ENCODE measurements at regions of chr2 and their contacts with region 1.

Region 1: GRCh38 chr2:71923887-71924533 is 223.7 kb downstream of the CYP26B1 start:
- DNase-seq: peak; percentile 74
- ATAC-seq: peak; percentile 68
- H3K4me3 Mint-ChIP-seq: no peak overlapping the region
- H3K27ac Mint-ChIP-seq: no peak overlapping the region
- H3K4me1 Mint-ChIP-seq: no peaks in the 10 kb centered on the region
- H3K27me3 Mint-ChIP-seq: no peaks in the 10 kb centered on the region
- CTCF ChIP-seq: peak; percentile 77

Region 2: GRCh38 chr2:71910277-71910676 is 13.7 kb before region 1 on chr2:
- CTCF ChIA-PET with region 1: interaction called, 10 read pairs
- POLR2A ChIA-PET with region 1: interaction called, 3 read pairs
- intact Hi-C with region 1: no loop called
- DNase-seq: no peak
- ATAC-seq: no peak
- H3K4me3 Mint-ChIP-seq: no peak overlapping the region
- H3K27ac Mint-ChIP-seq: no peak overlapping the region
- H3K4me1 Mint-ChIP-seq: no peaks in the 10 kb centered on the region
- H3K27me3 Mint-ChIP-seq: peaks cover 14% of the 10 kb centered on the region
- CTCF ChIP-seq: no peak

Region 3: GRCh38 chr2:72150157-72150865 is 226.3 kb after region 1 on chr2:
- CTCF ChIA-PET with region 1: interaction called, 55 read pairs
- POLR2A ChIA-PET with region 1: no interaction called
- intact Hi-C with region 1: loop called (anchors 1 kb)
- DNase-seq: peak; percentile 74
- ATAC-seq: peak; percentile 86
- H3K4me3 Mint-ChIP-seq: peak overlapping the region; percentile 53
- H3K27ac Mint-ChIP-seq: no peak overlapping the region
- H3K4me1 Mint-ChIP-seq: peaks cover 32% of the 10 kb centered on the region
- H3K27me3 Mint-ChIP-seq: peaks cover 56% of the 10 kb centered on the region
- CTCF ChIP-seq: peak; percentile 80

Region 4: GRCh38 chr2:72579591-72580180 is 655.7 kb after region 1 on chr2:
- CTCF ChIA-PET with region 1: interaction called, 32 read pairs
- POLR2A ChIA-PET with region 1: no interaction called
- intact Hi-C with region 1: loop called (anchors 5 kb)
- DNase-seq: no peak
- ATAC-seq: no peak
- H3K4me3 Mint-ChIP-seq: no peak overlapping the region
- H3K27ac Mint-ChIP-seq: no peak overlapping the region
- H3K4me1 Mint-ChIP-seq: no peaks in the 10 kb centered on the region
- H3K27me3 Mint-ChIP-seq: no peaks in the 10 kb centered on the region
- CTCF ChIP-seq: peak; percentile 65

Region 5: GRCh38 chr2:72745679-72746368 is 821.8 kb after region 1 on chr2:
- CTCF ChIA-PET with region 1: interaction called, 13 read pairs
- POLR2A ChIA-PET with region 1: no interaction called
- intact Hi-C with region 1: loop called (anchors 5 kb)
- DNase-seq: no peak
- ATAC-seq: no peak
- H3K4me3 Mint-ChIP-seq: no peak overlapping the region
- H3K27ac Mint-ChIP-seq: no peak overlapping the region
- H3K4me1 Mint-ChIP-seq: no peaks in the 10 kb centered on the region
- H3K27me3 Mint-ChIP-seq: no peaks in the 10 kb centered on the region
- CTCF ChIP-seq: peak; percentile 82

Measured in activated CD8-positive, alpha-beta T cell treated with anti-CD3 and anti-CD28 coated beads for 36 hours (primary cell).